HEK293T (cell line): ENCODE measurements at regions of chr14 and their contacts with region 1.

Region 1: GRCh38 chr14:75976826-75977581 is 4.8 kb downstream of the TGFB3 start:
- DNase-seq: no peak

Region 2: GRCh38 chr14:75906676-75907280 is 70.2 kb before region 1 on chr14:
- CTCF ChIA-PET with region 1: interaction called, 19 read pairs
- POLR2A ChIA-PET with region 1: interaction called, 5 read pairs
- DNase-seq: peak; percentile 54

Region 3: GRCh38 chr14:76168531-76168930 is 191.5 kb after region 1 on chr14:
- CTCF ChIA-PET with region 1: no interaction called
- POLR2A ChIA-PET with region 1: no interaction called
- DNase-seq: no peak